Naive thymus-derived CD4-positive, alpha-beta T cell (primary cell): ENCODE measurements at regions of chr16 and their contacts with region 1.

Region 1: GRCh38 chr16:66608241-66609138 is 4.0 kb downstream of the CMTM3 start:
- DNase-seq: peak; percentile 66 to 85 (median 78)
- ATAC-seq: peak; percentile 52
- H3K4me3 ChIP-seq: no peak overlapping the region
- H3K4me3 Mint-ChIP-seq: peak overlapping the region in 8 of 10 donors; percentile 6 to 82 (median 34)
- H3K27ac ChIP-seq: peak overlapping the region; percentile 40
- H3K27ac Mint-ChIP-seq: peak overlapping the region in 8 of 9 donors; percentile 45 to 85 (median 79)
- H3K4me1 ChIP-seq: peaks cover 17 to 34% of the 10 kb centered on the region in 2 donors
- H3K4me1 Mint-ChIP-seq: peaks cover 19 to 37% (median 35%) of the 10 kb centered on the region in 7 donors
- H3K27me3 ChIP-seq: no peaks in the 10 kb centered on the region
- H3K27me3 Mint-ChIP-seq: peaks cover 0 to 3% (median 0%) of the 10 kb centered on the region in 5 donors

Region 2: DNA sequence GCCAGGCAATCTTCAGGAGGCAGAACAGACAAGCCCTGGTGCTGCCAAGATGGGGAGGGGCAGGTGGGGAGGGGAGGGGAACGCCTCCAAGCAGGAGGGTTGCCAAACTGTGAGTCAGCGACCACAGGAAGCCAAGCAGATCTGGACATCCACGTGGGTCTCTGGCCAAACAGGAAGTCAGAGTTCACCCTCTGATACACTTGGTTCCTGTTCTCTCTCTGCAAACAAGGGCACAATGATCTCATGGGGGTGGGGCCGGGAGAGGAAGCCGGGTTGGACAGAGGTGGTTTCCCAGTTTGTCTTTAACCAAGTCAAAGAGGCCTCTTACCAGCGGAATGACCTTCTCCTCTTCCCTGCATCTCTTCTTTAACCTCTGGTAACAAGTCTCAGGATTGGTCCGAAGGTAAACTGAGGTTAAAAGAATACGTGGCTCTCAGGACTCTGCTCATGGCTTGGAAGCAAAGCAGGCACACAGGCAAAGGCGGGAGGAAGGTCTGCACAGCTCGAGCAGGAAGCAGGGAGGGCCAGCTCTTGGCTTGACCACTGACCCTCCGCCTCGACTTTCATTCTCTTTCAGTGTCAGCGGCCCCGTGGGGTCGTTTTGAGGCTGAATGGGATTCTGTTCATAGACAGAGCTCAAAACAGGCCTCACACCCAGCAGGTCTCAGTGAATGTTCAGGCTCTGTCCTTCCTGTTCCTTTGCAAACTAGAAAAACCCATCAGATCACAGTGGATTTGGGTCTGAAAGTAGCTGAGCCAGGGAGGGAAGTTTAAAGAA is 91.5 kb before region 1 on chr16:
- CTCF ChIA-PET with region 1: interaction called, 4 read pairs
- POLR2A ChIA-PET with region 1: interaction called, 4 read pairs
- intact Hi-C with region 1: loop called in 1 of 2 experiments (anchors 2 kb)
- DNase-seq: peak in 6 of 9 donors; percentile 36 to 80 (median 44)
- ATAC-seq: peak; percentile 92
- H3K4me3 ChIP-seq: peak overlapping the region; percentile 22
- H3K4me3 Mint-ChIP-seq: peak overlapping the region; percentile 23 to 88 (median 72)
- H3K27ac ChIP-seq: peak overlapping the region; percentile 58
- H3K27ac Mint-ChIP-seq: peak overlapping the region; percentile 67 to 99 (median 89)
- H3K4me1 ChIP-seq: peaks cover 54 to 61% of the 10 kb centered on the region in 2 donors
- H3K4me1 Mint-ChIP-seq: peaks cover 60 to 79% (median 71%) of the 10 kb centered on the region in 7 donors
- H3K27me3 ChIP-seq: no peaks in the 10 kb centered on the region
- H3K27me3 Mint-ChIP-seq: no peaks in the 10 kb centered on the region

Region 3: GRCh38 chr16:66552286-66553177 is 56.0 kb before region 1 on chr16 and contains the start of gene CKLF:
- CTCF ChIA-PET with region 1: interaction called, 9 read pairs
- POLR2A ChIA-PET with region 1: interaction called, 25 read pairs
- intact Hi-C with region 1: loop called (anchors 1 kb)
- DNase-seq: peak; percentile 84 to 96 (median 92)
- ATAC-seq: peak; percentile 83
- H3K4me3 ChIP-seq: peak within 1 kb of the TSS; percentile 94
- H3K4me3 Mint-ChIP-seq: peak within 1 kb of the TSS; percentile 92 to 99 (median 95)
- H3K27ac ChIP-seq: peak within 1 kb of the TSS; percentile 77
- H3K27ac Mint-ChIP-seq: peak within 1 kb of the TSS; percentile 91 to 97 (median 94)
- H3K4me1 ChIP-seq: peaks cover 49 to 68% of the 10 kb centered on the region in 2 donors
- H3K4me1 Mint-ChIP-seq: peaks cover 59 to 85% (median 80%) of the 10 kb centered on the region in 7 donors
- H3K27me3 ChIP-seq: no peaks in the 10 kb centered on the region
- H3K27me3 Mint-ChIP-seq: peaks cover 0 to 2% (median 0%) of the 10 kb centered on the region in 5 donors
- total RNA-seq, gene CKLF: 24.1 to 160 (median 42.9) TPM

Region 4: GRCh38 chr16:66588981-66589713 is 19.3 kb before region 1 on chr16:
- CTCF ChIA-PET with region 1: interaction called, 13 read pairs
- POLR2A ChIA-PET with region 1: interaction called, 16 read pairs
- intact Hi-C with region 1: loop called (anchors 1 kb)
- DNase-seq: peak; percentile 36 to 73 (median 60)
- ATAC-seq: peak; percentile 98
- H3K4me3 ChIP-seq: no peak overlapping the region
- H3K4me3 Mint-ChIP-seq: peak overlapping the region; percentile 73 to 96 (median 87)
- H3K27ac ChIP-seq: no peak overlapping the region
- H3K27ac Mint-ChIP-seq: peak overlapping the region; percentile 75 to 90 (median 83)
- H3K4me1 ChIP-seq: peaks cover 6 to 7% of the 10 kb centered on the region in 2 donors
- H3K4me1 Mint-ChIP-seq: peaks cover 27 to 51% (median 39%) of the 10 kb centered on the region in 7 donors
- H3K27me3 ChIP-seq: no peaks in the 10 kb centered on the region
- H3K27me3 Mint-ChIP-seq: peaks cover 0 to 2% (median 0%) of the 10 kb centered on the region in 5 donors

Region 5: GRCh38 chr16:66696669-66697630 is 88.5 kb after region 1 on chr16 and contains the start of gene CMTM4:
- CTCF ChIA-PET with region 1: no interaction called
- POLR2A ChIA-PET with region 1: no interaction called
- intact Hi-C with region 1: loop called (anchors 1 to 5 kb)
- DNase-seq: peak; percentile 56 to 85 (median 72)
- ATAC-seq: peak; percentile 98
- H3K4me3 ChIP-seq: peak within 1 kb of the TSS; percentile 69
- H3K4me3 Mint-ChIP-seq: peak within 1 kb of the TSS; percentile 77 to 91 (median 83)
- H3K27ac ChIP-seq: peak within 1 kb of the TSS; percentile 45
- H3K27ac Mint-ChIP-seq: peak within 1 kb of the TSS in 5 of 9 donors; percentile 36 to 81 (median 47)
- H3K4me1 ChIP-seq: peaks cover 5 to 10% of the 10 kb centered on the region in 2 donors
- H3K4me1 Mint-ChIP-seq: peaks cover 6 to 16% (median 12%) of the 10 kb centered on the region in 7 donors
- H3K27me3 ChIP-seq: no peaks in the 10 kb centered on the region
- H3K27me3 Mint-ChIP-seq: peaks cover 0 to 57% (median 7%) of the 10 kb centered on the region in 5 donors
- total RNA-seq, gene CMTM4: 1.5 to 2.5 (median 1.8) TPM

Region 6: DNA sequence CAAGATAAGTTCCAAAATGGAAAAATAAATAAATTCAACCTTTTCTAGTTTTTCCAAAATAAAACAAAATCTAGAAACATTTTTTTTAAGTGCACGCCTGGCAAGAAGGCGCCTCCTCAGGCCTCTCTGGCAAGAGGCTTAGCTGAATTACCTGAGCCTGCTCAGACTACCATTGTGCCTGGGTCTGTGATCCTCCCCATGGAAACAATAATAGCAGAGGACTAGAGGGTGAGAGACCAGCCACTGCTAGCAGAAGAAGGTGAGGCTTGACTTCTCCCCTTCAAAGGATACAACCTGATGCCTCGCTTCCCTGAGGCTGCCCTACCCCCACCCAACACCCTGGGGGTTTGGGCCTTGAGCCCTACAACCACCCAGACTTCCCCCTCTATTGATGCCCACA is 178.1 kb after region 1 on chr16:
- CTCF ChIA-PET with region 1: no interaction called
- POLR2A ChIA-PET with region 1: no interaction called
- intact Hi-C with region 1: no loop called
- DNase-seq: no peak
- ATAC-seq: no peak
- H3K4me3 ChIP-seq: no peak overlapping the region
- H3K4me3 Mint-ChIP-seq: no peak overlapping the region
- H3K27ac ChIP-seq: no peak overlapping the region
- H3K27ac Mint-ChIP-seq: no peak overlapping the region
- H3K4me1 ChIP-seq: no peaks in the 10 kb centered on the region
- H3K4me1 Mint-ChIP-seq: no peaks in the 10 kb centered on the region
- H3K27me3 ChIP-seq: no peaks in the 10 kb centered on the region
- H3K27me3 Mint-ChIP-seq: peaks cover 0 to 9% (median 0%) of the 10 kb centered on the region in 5 donors

Region 7: DNA sequence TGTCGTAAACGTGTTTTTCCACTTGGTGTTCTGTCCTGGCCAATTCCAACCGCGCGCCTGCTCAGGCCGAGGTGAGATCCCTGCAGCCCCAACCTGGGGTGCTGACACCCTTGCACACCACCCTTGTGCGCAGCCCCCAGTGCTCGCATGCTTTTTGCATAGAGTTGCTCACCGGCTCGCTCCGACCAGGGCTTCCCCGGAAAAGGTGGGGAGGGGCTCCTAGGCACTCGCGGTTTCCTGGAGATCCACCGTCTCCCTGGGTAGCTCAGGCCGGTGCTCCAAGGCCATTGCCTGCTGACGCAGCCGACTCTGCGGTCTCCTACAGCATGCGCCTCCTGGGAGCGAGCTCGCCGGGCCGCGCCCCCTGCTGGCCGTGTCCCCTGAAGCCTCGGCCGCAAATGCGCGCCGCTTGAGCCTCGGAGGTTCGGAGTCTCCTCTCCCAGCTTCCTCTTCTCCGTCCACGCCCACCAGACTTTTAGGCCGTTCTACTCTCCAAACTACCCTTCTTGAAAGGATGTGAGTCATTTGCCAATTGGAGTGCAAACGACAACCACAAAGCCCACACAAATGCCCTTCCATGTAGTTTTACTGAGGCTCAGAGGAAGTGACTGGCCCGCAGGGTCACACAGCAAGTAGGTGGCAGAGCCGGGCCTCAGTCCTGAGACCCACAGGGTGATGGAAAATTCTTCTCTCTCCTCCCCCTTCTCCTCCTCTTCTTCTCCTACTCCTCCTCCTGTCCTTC is 264.6 kb after region 1 on chr16:
- CTCF ChIA-PET with region 1: interaction called, 4 read pairs
- POLR2A ChIA-PET with region 1: no interaction called
- intact Hi-C with region 1: loop called (anchors 2 to 5 kb)
- DNase-seq: peak; percentile 62 to 93 (median 77)
- ATAC-seq: peak; percentile 95
- H3K4me3 ChIP-seq: peak overlapping the region; percentile 48
- H3K4me3 Mint-ChIP-seq: peak overlapping the region; percentile 77 to 94 (median 82)
- H3K27ac ChIP-seq: peak overlapping the region; percentile 18
- H3K27ac Mint-ChIP-seq: peak overlapping the region; percentile 7 to 93 (median 60)
- H3K4me1 ChIP-seq: peaks cover 5 to 6% of the 10 kb centered on the region in 2 donors
- H3K4me1 Mint-ChIP-seq: peaks cover 7 to 49% (median 14%) of the 10 kb centered on the region in 7 donors
- H3K27me3 ChIP-seq: no peaks in the 10 kb centered on the region
- H3K27me3 Mint-ChIP-seq: no peaks in the 10 kb centered on the region